ENCODE measurements at regions of chr12 and their contacts with region 1.

Region 1: DNA sequence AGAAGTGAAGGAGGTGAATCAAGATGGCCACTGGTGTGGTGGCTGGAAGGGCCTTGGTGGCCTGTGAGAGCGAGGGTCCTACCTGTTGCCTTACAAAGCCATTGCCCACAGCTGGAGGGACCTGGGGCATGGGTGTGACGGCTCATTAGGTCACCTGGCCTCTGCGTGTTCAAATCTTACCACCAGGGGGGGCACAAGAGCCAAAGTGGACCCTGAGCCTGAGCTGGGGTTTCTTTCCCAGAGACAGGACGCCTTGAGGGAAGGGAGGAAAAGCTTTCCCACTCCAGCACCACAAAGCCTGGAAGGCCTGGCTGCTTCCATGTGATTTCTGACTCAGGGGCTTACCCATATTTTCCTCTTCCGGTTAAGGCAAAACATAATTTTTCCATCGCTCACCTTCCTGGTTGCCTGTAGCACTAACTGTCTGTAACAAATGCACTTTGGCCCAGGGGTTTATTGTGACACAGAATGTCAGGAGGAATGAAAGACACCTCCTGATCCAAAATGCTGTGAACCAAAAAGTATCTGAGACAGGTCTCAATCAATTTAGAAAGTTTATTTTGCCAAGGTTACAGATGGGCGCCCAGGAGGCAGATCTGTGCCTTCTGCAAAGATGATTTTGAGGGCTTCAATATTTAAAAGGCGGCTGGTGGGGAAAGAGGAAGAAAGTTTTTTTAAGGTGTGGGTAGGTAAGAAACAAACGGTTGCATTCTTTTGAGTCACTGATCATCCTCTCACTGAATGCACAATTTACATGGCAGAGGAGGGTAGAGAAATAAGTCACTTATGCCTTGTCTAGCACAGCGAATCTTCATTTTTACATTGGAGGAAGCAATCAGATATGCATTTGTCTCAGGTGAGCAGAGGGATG is 4.3 kb upstream of the CD9 start:
- DNase-seq: peak; percentile 89
- H3K4me3 ChIP-seq: no peak overlapping the region
- H3K27ac ChIP-seq: peak overlapping the region; percentile 41 to 50
- H3K4me1 ChIP-seq: peaks cover 24% of the 10 kb centered on the region
- H3K27me3 ChIP-seq: no peaks in the 10 kb centered on the region
- CTCF ChIP-seq: peak; percentile 94 to 99 (median 98)
- POLR2A ChIP-seq: no peak

Region 2: DNA sequence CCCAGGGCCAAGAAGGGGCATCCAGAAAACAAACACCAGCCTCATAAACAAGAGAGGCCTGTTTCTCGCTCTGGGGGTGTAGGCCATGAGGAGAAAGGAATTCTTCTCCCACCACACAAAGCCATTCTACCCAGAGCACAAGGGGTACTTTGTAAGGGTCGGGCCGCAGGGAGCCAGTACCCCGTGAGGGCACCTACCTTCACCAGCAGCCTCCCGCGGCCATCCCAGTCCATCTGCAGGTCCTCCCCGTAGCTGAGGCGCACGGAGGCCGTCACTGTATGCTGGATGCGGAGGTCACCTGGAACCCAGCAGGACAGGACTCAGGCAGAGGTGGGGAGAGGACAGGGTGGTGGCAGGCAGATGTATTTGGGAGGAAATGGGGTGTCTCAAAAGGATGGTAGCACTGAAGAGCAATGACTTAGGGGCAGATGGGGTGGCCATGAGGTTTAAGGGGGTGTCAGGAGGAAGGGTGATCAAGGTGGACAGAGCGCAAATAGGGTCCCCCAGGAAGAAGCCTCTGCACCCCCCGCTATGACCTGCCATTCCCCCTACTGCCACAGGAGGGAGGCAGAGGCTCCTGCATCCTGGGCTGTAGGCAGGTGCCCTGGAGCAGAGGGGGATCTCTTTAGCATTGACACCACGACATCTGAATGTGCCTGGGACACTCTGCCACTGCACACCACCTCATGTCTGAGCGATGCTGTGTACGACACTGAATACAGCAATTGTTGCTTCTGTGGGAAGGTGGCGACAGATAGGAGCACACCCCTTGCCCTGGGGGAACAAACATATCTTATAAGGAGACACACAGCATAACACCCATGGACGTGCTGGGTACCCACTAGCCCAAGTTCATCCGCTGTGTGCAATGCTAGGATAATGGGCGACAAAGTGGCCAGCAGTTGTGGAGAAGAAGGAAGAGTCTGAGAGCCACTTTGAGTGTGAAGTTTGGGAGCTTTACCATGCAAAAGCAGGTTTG is 132.9 kb before region 1 on chr12:
- intact Hi-C with region 1: loop called (anchors 5 kb)
- DNase-seq: peak; percentile 45
- H3K4me3 ChIP-seq: no peak overlapping the region
- H3K27ac ChIP-seq: no peak overlapping the region
- H3K4me1 ChIP-seq: no peaks in the 10 kb centered on the region
- H3K27me3 ChIP-seq: no peaks in the 10 kb centered on the region
- CTCF ChIP-seq: peak; percentile 66 to 94 (median 82)
- POLR2A ChIP-seq: no peak

Region 3: DNA sequence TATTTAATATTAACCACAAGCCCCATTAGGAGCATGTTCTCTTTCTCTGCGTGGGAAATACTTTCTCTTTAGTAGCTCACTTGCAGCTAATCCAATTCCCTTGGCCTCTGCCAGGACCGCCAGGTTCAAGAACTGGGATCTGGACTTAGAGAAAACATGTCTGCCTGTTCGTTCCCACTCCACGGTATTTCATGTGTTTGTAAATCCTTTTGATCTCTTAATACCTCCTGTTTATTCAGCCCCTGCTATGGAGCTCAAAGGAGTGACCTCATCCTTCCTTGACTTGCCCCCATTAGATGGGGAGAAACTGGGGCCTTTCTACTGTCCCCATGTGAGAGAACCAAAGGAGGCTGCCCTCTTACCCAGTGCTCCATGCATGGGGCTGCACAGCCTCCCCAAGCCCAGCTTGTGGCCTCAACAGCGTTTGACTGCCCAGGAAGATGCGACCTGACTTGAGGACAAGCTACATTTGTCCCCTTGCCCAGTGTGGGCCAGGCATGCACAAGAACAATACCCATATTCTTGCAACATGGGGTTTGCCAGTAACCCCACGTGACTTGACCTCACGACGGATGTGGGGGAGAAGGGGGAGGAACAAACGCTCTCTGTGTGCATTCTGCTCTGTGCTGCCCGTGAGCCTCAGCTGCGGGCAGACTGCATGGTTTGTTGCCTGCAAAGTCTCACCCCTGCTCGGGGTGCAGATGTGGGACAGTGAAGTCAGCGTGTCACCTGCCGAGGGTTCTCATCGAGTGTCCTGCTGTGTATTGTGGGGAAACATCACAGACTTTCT is 34.6 kb after region 1 on chr12:
- intact Hi-C with region 1: loop called (anchors 2 kb)
- DNase-seq: peak; percentile 81
- H3K4me3 ChIP-seq: no peak overlapping the region
- H3K27ac ChIP-seq: peak overlapping the region; percentile 94 to 98
- H3K4me1 ChIP-seq: peaks cover 91% of the 10 kb centered on the region
- H3K27me3 ChIP-seq: no peaks in the 10 kb centered on the region
- CTCF ChIP-seq: no peak
- POLR2A ChIP-seq: no peak

Region 4: GRCh38 chr12:6278439-6279255 is 82.7 kb after region 1 on chr12:
- intact Hi-C with region 1: loop called (anchors 1 kb)
- DNase-seq: peak; percentile 84
- H3K4me3 ChIP-seq: peak overlapping the region; percentile 45 to 59
- H3K27ac ChIP-seq: peak overlapping the region; percentile 94 to 99
- H3K4me1 ChIP-seq: peaks cover 26% of the 10 kb centered on the region
- H3K27me3 ChIP-seq: no peaks in the 10 kb centered on the region
- CTCF ChIP-seq: peak; percentile 98 to 100 (median 99)
- POLR2A ChIP-seq: peak; percentile 47

Region 5: GRCh38 chr12:6285063-6285477 is 89.2 kb after region 1 on chr12:
- intact Hi-C with region 1: loop called (anchors 1 kb)
- DNase-seq: peak; percentile 58
- H3K4me3 ChIP-seq: no peak overlapping the region
- H3K27ac ChIP-seq: no peak overlapping the region
- H3K4me1 ChIP-seq: no peaks in the 10 kb centered on the region
- H3K27me3 ChIP-seq: no peaks in the 10 kb centered on the region
- CTCF ChIP-seq: peak; percentile 92 to 95 (median 94)
- POLR2A ChIP-seq: no peak

Measured in prostate gland (tissue), 2 donors.